Spleen (tissue), 13 donors: ENCODE measurements at regions of chr1 and their contacts with region 1.

Region 1: GRCh38 chr1:226181996-226182714 is 4.4 kb downstream of the ACBD3 start:
- DNase-seq: no peak
- H3K4me3 ChIP-seq: peak overlapping the region in 1 of 8 donors; percentile 39
- H3K27ac ChIP-seq: peak overlapping the region in 5 of 8 donors; percentile 48 to 80 (median 63)
- H3K4me1 ChIP-seq: peaks cover 36 to 93% (median 71%) of the 10 kb centered on the region in 6 donors
- H3K27me3 ChIP-seq: no peaks in the 10 kb centered on the region
- CTCF ChIP-seq: peak in 5 of 11 experiments; percentile 20 to 46 (median 37)
- POLR2A ChIP-seq: no peak

Region 2: GRCh38 chr1:226135059-226135651 is 47.0 kb before region 1 on chr1:
- intact Hi-C with region 1: loop called (anchors 5 kb)
- DNase-seq: peak; percentile 62
- H3K4me3 ChIP-seq: no peak overlapping the region
- H3K27ac ChIP-seq: no peak overlapping the region
- H3K4me1 ChIP-seq: peaks cover 0 to 33% (median 16%) of the 10 kb centered on the region in 6 donors
- H3K27me3 ChIP-seq: no peaks in the 10 kb centered on the region
- CTCF ChIP-seq: no peak
- POLR2A ChIP-seq: no peak

Region 3: GRCh38 chr1:226457307-226457712 is 275.2 kb after region 1 on chr1:
- intact Hi-C with region 1: no loop called
- DNase-seq: peak; percentile 75
- H3K4me3 ChIP-seq: peak overlapping the region in 1 of 8 donors; percentile 31
- H3K27ac ChIP-seq: peak overlapping the region in 1 of 8 donors; percentile 9
- H3K4me1 ChIP-seq: peaks cover 0 to 5% (median 0%) of the 10 kb centered on the region in 6 donors
- H3K27me3 ChIP-seq: peaks cover 0 to 12% (median 0%) of the 10 kb centered on the region in 7 donors
- CTCF ChIP-seq: peak in 4 of 11 experiments; percentile 15 to 19 (median 18)
- POLR2A ChIP-seq: no peak